Left colon (tissue), 2 donors: ENCODE measurements at regions of chr11 and their contacts with region 1.

Region 1: DNA sequence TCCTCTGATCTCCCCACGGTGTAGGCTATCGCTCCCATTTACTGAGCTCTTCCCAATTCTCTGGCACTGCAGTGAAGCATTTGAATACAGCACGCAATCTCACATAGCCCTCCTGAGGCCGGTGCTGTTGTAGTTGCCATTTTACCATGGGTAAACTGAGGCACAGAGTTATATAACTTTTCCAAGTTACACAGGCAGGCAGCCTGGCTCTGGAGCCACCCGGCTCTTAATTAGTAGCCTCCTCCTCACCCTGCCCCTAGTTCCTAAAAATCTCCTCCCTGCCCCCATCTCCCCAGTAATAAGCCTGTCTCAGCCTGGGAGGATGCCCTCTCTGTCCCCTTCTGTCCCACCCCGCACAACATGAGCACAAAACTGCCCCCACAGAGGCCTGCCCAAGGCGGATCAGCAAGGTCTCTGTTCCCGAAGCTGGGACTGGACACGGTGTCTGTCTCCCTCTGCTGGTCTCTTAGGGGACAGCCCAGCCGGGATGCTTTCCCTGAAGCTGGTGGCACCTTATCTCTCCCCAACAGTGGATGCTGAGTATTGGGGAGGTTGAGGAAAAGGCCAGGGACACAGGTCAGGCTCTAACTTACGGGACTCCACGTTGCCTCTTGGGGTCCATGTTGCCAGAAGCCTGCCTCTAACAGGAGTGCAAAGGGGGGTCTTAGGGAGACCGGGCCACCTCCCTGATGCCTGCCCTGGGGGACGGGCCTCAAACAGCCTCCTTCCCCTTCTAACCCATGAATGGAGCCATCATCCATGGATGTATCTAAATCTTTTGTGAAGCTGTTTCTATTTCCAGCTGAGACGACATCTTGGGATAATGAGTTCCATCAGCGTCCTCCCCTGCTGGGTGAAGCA is 9.1 kb upstream of the CLCF1 start:
- DNase-seq: peak; percentile 67 to 85
- ATAC-seq: peak; percentile 84

Region 2: DNA sequence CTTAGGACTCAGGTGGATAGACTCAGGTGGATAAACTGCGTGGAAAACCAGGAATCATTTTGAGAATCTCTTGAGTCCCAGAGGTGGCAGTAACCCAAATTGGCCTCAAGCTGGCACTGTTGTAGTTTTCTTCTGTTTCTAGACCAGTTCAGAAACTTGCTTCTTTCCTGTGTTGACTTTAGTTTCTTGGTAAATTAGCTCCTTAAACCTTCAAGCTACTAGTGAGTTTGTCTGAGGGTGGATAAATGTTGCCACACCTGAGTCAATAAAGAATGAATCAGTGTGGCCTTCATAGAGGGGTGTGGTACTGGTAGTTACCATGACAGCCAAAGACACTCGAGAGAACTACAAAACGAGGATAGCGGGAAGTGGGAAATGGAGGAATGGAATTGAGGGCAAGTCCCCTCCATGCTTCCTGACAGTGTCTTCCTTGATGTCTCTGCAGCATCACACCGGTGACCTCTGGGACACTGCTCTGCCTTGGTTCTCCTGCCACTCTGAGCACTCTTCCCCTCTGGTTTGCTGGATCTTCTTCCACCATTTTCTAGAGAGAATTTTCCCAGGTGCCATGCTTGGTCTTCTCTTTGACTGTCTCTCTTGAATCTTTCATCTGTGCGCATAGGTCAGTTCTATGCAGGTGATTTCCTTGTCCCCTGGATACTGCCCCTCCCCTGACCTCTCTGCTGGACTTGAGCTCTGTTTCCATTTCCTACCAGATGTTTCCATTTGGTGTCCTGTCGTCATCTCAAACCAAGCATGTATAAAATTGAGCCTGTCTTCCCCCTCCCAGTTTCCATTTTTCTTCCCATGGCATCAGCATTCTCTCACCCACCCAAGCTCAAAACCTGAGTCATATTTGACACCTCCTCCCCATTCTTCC is 36.3 kb before region 1 on chr11:
- intact Hi-C with region 1: loop called in 1 of 2 experiments (anchors 5 kb)
- DNase-seq: peak; percentile 57 to 62
- ATAC-seq: peak; percentile 87

Region 3: GRCh38 chr11:67356864-67357561 is 25.5 kb before region 1 on chr11:
- intact Hi-C with region 1: loop called in 1 of 2 experiments (anchors 2 kb)
- DNase-seq: peak; percentile 64 to 77
- ATAC-seq: peak; percentile 26